Activated CD4-positive, alpha-beta T cell treated with anti-CD3 and anti-CD28 coated beads, Interleukin-2, amount 10 ng/mL, durations not matched to agents 24 days and 14 days (primary cell): ENCODE measurements at regions of chr1 and their contacts with region 1.

Region 1: DNA sequence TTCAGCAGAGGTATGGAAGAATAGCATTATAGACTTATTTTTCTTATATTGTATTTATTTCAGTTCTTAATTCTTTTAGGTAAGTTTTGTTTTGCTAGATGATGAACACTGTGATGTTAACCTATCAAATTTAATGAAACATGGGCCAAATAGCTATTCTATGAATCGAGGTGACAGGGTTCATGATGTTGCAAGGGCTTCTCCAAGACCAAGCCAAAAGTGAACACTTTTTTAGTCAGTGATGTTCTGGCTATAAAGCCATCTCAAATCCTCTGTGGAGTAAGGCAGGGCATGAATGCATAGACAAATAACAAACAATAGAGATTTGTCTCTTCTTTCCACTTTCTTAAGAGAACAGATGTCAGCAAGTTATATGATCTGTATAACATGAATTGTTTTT is 26.7 kb downstream of the C1orf146 start:
- DNase-seq: no peak
- H3K4me3 Mint-ChIP-seq: no peak overlapping the region
- H3K27ac Mint-ChIP-seq: no peak overlapping the region
- H3K4me1 Mint-ChIP-seq: no peaks in the 10 kb centered on the region
- H3K27me3 Mint-ChIP-seq: no peaks in the 10 kb centered on the region

Region 2: DNA sequence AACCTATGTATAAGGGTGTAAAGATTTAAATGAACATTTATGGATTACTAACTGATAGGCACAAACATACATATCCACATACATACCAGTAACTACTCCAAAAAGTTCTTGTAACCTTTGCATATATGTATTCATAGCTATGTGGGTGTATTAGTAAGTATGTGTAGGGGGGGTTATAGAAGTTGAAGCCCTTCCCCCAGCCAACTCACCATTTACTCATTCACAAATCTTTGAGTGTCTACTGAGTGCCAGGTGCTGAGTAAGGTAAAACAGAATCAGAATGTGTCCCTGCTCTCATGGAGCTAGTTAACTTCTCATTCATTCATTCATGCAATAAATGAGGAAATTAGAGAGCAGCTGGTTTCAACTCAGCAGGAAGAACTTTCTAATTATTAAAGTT is 25.3 kb before region 1 on chr1:
- intact Hi-C with region 1: no loop called
- DNase-seq: no peak
- H3K4me3 Mint-ChIP-seq: no peak overlapping the region
- H3K27ac Mint-ChIP-seq: no peak overlapping the region
- H3K4me1 Mint-ChIP-seq: no peaks in the 10 kb centered on the region
- H3K27me3 Mint-ChIP-seq: peaks cover 4% of the 10 kb centered on the region

Region 3: DNA sequence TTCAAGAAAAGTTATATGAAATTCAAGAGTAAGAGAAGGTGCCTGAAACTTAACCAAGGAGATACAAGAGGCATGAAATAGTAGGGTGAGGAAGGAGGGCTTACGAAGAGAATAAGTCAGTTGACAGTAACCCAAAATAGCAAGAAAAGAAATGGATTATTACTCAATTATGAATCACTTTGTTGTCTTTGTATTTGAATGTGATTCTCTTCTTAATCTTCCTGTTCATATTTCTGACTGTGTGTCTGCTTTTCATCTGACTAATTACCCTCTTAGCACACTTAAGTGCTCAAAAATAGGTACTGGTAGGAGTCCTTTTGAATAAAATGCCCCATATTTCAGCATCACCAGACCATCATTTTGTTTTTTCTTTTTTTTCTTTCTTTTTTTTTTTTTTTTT is 15.0 kb after region 1 on chr1:
- intact Hi-C with region 1: loop called (anchors 1 kb)
- DNase-seq: no peak
- H3K4me3 Mint-ChIP-seq: no peak overlapping the region
- H3K27ac Mint-ChIP-seq: no peak overlapping the region
- H3K4me1 Mint-ChIP-seq: peaks cover 2% of the 10 kb centered on the region
- H3K27me3 Mint-ChIP-seq: no peaks in the 10 kb centered on the region

Region 4: DNA sequence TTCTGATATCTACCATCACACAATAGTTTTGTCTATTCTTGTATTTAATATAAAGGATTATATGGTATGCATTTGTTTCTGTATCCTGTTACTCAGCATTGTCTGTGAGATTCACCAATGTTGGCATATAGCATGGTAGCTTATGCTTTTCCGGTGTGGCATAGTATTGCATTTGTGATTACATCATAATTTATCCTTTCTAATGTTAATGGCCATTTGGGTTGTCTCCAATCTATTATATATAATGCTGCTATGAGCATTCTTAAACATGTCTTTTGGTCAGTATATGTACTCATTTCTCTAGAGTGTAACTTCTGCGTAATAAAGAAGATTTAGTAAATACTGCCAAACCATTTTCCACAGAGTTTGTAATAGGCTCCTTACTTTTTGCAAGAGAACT is 283.3 kb after region 1 on chr1:
- intact Hi-C with region 1: no loop called
- DNase-seq: no peak
- H3K4me3 Mint-ChIP-seq: no peak overlapping the region
- H3K27ac Mint-ChIP-seq: no peak overlapping the region
- H3K4me1 Mint-ChIP-seq: peaks cover 33% of the 10 kb centered on the region
- H3K27me3 Mint-ChIP-seq: no peaks in the 10 kb centered on the region